ENCODE measurements at regions of chr3 and their contacts with region 1.

Region 1: DNA sequence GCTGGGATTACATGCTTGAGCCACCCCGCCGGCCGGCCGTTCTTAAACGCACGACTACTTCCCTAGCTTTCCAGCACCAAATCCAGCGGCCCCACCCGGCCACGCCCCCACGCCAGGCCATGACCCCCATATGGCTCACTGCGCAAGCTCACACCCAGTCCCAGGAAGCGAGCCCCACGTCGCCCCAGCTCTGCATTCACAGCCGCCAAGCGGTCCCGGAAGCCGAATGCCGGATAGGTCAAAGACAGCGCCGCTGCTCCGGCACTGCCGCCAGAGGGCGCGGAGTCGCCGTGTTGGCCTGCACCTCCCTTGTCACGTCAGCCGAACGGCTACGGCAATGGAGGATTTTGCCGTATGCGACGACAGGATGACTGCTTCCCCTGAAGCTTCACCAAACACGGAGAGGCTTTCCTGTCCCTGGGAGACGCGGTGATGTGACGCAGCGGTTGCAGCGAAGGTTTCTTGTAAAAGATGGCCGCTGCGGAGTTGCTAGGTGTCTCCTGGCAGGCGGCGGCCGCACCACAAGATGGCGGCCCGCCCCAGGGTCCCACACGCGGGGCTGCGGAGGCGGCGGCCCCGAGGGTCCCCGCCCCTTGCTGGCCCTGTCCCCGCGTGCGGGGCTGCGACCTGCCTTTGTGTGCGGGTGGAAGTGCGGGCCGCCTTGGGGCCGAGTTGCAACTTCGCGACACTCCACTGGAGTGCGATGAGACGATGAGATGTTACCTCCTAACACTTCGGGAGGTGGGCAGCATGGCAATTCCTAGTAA is 30.2 kb upstream of the RPN1 start:
- DNase-seq: peak; percentile 93
- ATAC-seq: peak; percentile 99
- H3K4me3 ChIP-seq: peak overlapping the region; percentile 83
- H3K27ac ChIP-seq: peak overlapping the region; percentile 98
- H3K4me1 ChIP-seq: 0 out of 2 replicates have a peak, but pooled peaks cover under 1% of the 10 kb centered on the region
- H3K27me3 ChIP-seq: no peaks in the 10 kb centered on the region
- CTCF ChIP-seq: peak; percentile 96 to 99 (median 98)
- EP300 ChIP-seq: 0 out of 4 replicates have a peak, but pooled peaks of 1 of the 2 experiments have one; percentile 25
- POLR2A ChIP-seq: peak; percentile 98
- RAD21 ChIP-seq: peak; percentile 85

Region 2: GRCh38 chr3:128322066-128323022 is 358.4 kb before region 1 on chr3:
- CTCF ChIA-PET with region 1: no interaction called
- POLR2A ChIA-PET with region 1: no interaction called
- RAD21 ChIA-PET with region 1: no interaction called
- SMC1A ChIA-PET with region 1: no interaction called
- in situ Hi-C with region 1: no loop called
- intact Hi-C with region 1: no loop called
- DNase-seq: no peak
- ATAC-seq: peak; percentile 77
- H3K4me3 ChIP-seq: no peak overlapping the region
- H3K27ac ChIP-seq: no peak overlapping the region
- H3K4me1 ChIP-seq: no peaks in the 10 kb centered on the region
- H3K27me3 ChIP-seq: no peaks in the 10 kb centered on the region
- CTCF ChIP-seq: peak; percentile 34 to 55 (median 48); a peak in 4 of 6 replicates
- EP300 ChIP-seq: no peak
- POLR2A ChIP-seq: no peak
- RAD21 ChIP-seq: peak; percentile 36

Region 3: DNA sequence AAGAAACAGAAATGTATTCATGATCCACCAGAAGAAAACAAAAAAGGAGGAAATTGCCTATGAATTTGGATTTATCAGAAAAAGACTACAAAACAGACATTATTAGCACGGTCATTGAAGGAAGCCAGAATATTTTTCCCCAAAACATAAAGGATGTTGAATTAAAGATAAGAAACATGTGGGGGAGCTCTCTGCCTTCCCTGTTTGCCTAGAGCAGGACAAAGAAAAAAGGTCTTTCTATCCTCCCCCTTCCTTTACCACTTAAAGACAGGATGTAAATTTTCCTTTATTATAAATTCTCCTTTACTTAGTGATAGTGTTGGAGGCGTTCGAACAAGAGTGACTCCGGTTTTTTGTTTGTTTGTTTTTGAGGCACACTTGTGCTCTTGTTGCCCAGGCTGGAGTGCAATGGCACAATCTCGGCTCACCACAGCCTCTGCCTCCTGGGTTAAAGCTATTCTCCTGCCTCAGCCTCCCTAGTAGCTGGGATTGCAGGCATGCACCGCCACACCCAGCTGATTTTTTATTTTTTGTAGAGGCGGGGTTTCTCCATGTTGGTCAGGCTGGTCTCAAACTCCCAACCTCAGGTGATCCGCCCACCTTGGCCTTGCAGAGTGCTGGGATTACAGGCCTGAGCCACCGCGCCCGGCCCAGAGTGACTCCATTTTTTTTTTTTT is 15.3 kb before region 1 on chr3:
- CTCF ChIA-PET with region 1: interaction called, 3 read pairs
- POLR2A ChIA-PET with region 1: interaction called, 12 read pairs
- RAD21 ChIA-PET with region 1: interaction called, 4 read pairs
- SMC1A ChIA-PET with region 1: no interaction called
- in situ Hi-C with region 1: no loop called
- intact Hi-C with region 1: no loop called
- DNase-seq: no peak
- ATAC-seq: no peak
- H3K4me3 ChIP-seq: no peak overlapping the region
- H3K27ac ChIP-seq: no peak overlapping the region
- H3K4me1 ChIP-seq: no peaks in the 10 kb centered on the region
- H3K27me3 ChIP-seq: no peaks in the 10 kb centered on the region
- CTCF ChIP-seq: peak in 1 of 3 experiments; percentile 16; a peak in 1 of 6 replicates
- EP300 ChIP-seq: no peak
- POLR2A ChIP-seq: no peak
- RAD21 ChIP-seq: peak; percentile 37; the same call in 1 of the 2 replicates

Region 4: DNA sequence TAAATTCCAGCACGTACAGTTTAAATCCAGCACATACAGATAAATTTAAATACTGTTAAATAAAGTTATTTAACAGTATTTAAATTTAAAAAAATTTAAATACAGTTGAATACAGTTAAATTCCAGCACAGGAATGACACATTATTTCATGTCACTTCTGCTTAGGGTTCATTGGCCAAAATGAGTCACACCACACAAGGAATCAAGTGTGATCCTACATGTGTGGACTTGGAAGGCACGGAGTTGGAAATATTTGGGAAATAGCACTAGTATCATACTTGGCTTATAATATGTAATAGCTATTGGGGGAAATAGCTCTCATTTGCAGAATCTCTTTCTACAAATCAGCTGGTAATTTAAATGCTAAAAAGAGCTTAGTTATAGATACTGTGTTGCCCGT is 55.8 kb after region 1 on chr3:
- CTCF ChIA-PET with region 1: interaction called, 26 read pairs
- POLR2A ChIA-PET with region 1: no interaction called
- RAD21 ChIA-PET with region 1: no interaction called
- SMC1A ChIA-PET with region 1: interaction called, 4 read pairs
- in situ Hi-C with region 1: no loop called
- intact Hi-C with region 1: no loop called
- DNase-seq: no peak
- ATAC-seq: no peak
- H3K4me3 ChIP-seq: no peak overlapping the region
- H3K27ac ChIP-seq: no peak overlapping the region
- H3K4me1 ChIP-seq: peaks cover 8% of the 10 kb centered on the region
- H3K27me3 ChIP-seq: no peaks in the 10 kb centered on the region
- CTCF ChIP-seq: no peak
- EP300 ChIP-seq: no peak
- POLR2A ChIP-seq: no peak
- RAD21 ChIP-seq: no peak

Region 5: DNA sequence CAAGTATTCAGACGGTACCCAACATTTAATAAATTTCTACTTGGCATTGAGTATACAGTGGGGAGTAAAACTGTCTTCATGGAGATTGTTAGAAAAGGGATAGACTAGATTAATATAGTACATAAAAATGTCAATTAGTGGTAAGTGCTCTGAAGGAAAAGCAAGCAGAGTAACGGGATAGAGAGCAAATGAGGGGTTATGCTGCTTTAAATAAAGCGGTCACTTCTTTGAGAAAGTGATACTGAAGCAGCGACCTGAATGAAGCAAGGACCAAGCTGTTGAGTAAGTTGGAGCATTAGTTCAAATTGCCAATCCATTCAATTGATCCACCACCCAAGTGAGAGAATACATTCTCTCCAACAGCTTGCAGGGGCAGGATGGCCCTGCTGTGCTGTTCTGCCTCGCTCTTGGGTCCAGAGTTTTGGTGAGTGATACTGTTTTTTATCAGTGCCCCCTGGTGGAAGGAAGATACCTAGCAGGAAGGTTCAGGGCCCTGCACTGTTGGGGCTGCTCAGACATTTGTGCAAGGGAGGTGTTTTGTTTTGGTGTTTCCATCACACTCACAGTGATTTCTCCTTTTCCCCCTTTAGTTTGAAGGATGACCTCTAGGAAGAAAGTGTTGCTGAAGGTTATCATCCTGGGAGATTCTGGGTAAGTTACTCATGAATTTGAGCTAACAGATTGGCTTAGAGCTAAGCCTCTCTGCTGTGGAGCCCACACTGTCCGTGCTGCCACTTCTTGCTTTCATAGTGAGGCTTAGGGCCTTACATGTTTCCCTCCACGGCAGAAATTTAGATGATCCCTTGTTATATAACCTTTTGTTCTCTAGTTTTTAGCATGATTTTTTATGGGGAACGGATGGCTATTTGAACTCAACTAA is 114.2 kb after region 1 on chr3:
- CTCF ChIA-PET with region 1: interaction called, 244 read pairs
- POLR2A ChIA-PET with region 1: interaction called, 12 read pairs
- RAD21 ChIA-PET with region 1: interaction called, 112 read pairs
- SMC1A ChIA-PET with region 1: interaction called, 101 read pairs
- in situ Hi-C with region 1: loop called (anchors 5 kb)
- intact Hi-C with region 1: loop called (anchors 1 kb)
- DNase-seq: no peak
- ATAC-seq: peak; percentile 98
- H3K4me3 ChIP-seq: no peak overlapping the region
- H3K27ac ChIP-seq: no peak overlapping the region
- H3K4me1 ChIP-seq: peaks cover 39% of the 10 kb centered on the region
- H3K27me3 ChIP-seq: no peaks in the 10 kb centered on the region
- CTCF ChIP-seq: peak; percentile 76 to 79 (median 79)
- EP300 ChIP-seq: no peak
- POLR2A ChIP-seq: no peak
- RAD21 ChIP-seq: peak; percentile 80

Region 6: GRCh38 chr3:128845778-128846485 is 165.1 kb after region 1 on chr3:
- CTCF ChIA-PET with region 1: interaction called, 26 read pairs
- POLR2A ChIA-PET with region 1: no interaction called
- RAD21 ChIA-PET with region 1: interaction called, 8 read pairs
- SMC1A ChIA-PET with region 1: interaction called, 9 read pairs
- in situ Hi-C with region 1: no loop called
- intact Hi-C with region 1: no loop called
- DNase-seq: peak; percentile 7
- ATAC-seq: peak; percentile 97
- H3K4me3 ChIP-seq: peak overlapping the region; percentile 46
- H3K27ac ChIP-seq: no peak overlapping the region
- H3K4me1 ChIP-seq: peaks cover 4% of the 10 kb centered on the region
- H3K27me3 ChIP-seq: no peaks in the 10 kb centered on the region
- CTCF ChIP-seq: peak; percentile 48 to 78 (median 63)
- EP300 ChIP-seq: no peak
- POLR2A ChIP-seq: 0 out of 2 replicates have a peak, but pooled peaks have one; percentile 48
- RAD21 ChIP-seq: peak; percentile 58

Region 7: GRCh38 chr3:129016356-129016719 is 335.6 kb after region 1 on chr3:
- CTCF ChIA-PET with region 1: no interaction called
- POLR2A ChIA-PET with region 1: no interaction called
- RAD21 ChIA-PET with region 1: no interaction called
- SMC1A ChIA-PET with region 1: no interaction called
- in situ Hi-C with region 1: no loop called
- intact Hi-C with region 1: no loop called
- DNase-seq: no peak
- ATAC-seq: peak; percentile 77
- H3K4me3 ChIP-seq: no peak overlapping the region
- H3K27ac ChIP-seq: no peak overlapping the region
- H3K4me1 ChIP-seq: peaks cover 19% of the 10 kb centered on the region
- H3K27me3 ChIP-seq: no peaks in the 10 kb centered on the region
- CTCF ChIP-seq: peak in 1 of 3 experiments; percentile 12; a peak in 1 of 6 replicates
- EP300 ChIP-seq: no peak
- POLR2A ChIP-seq: no peak
- RAD21 ChIP-seq: no peak

Measured in GM12878 (cell line).